ENCODE measurements at regions of chr7 and their contacts with region 1.

Region 1: DNA sequence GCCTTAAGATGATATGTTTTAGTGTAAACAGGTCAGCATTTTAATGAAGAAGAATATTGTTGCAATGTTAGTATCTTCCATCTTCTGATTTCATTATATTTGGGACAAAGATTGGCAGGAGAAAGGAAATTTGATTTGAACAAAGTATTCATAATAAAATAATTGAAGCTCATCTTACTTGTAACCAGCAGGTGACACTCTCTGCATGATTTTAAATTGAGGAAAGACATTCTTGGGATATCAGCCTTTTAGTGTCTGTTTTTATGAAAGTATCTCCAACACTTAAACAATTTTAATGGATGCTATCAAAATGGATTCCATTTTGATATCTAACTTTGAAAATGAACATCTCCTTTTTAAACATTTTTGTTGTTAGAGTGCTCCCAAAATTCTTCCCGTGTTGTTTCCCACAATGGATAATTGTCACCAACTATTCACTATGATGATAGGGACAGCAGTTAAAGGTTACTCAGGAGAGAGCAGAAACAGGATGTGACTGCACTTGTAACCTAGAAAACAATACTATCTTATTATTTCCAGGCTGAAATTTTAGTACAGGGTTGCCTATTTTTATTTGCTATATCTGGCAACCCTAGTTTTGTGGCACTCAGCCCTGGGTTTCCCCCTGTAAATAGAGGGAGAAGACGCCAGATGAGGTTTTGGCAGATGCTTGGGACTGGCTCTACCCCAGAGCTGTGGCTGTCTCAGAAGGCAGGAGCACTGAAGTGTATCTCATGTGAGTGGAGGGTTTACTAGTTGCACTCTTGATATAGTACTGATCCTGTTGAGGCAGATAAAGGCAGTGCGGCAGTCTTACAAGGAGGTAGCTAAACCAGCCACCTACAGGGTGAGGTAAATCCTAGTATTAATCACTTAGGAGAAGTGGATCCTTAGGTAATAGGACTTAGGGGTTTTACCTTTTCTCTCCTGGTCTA is 31.0 kb upstream of the ABCB4 start:
- DNase-seq: peak; percentile 39
- H3K4me3 ChIP-seq: no peak overlapping the region
- H3K27ac ChIP-seq: no peak overlapping the region
- H3K4me1 ChIP-seq: no peaks in the 10 kb centered on the region
- H3K27me3 ChIP-seq: peaks cover 0 to 5% of the 10 kb centered on the region in 2 experiments
- CTCF ChIP-seq: peak; percentile 9 to 29
- POLR2A ChIP-seq: no peak

Region 2: DNA sequence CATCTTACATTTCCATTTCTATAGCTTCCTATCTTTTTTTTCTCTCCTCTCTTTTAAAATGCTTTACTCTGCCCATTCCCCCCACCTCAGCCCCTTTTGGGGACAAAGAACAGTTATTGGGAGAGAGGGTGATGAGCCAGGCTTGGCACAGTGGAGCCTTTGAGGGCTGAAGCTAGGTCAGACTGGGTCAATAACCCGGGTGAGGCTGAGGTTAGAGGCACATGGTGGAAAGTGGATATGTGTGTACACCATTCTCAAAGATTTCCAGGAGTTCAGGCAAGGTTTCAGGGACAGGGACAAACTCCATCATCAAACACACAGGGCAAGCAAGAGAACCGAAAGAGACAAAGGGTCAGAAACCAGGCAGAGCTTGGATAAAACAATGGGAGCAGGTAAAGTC is 42.5 kb before region 1 on chr7:
- CTCF ChIA-PET with region 1: no interaction called
- POLR2A ChIA-PET with region 1: no interaction called
- dilution Hi-C with region 1: no loop called
- intact Hi-C with region 1: no loop called
- DNase-seq: no peak
- H3K4me3 ChIP-seq: no peak overlapping the region
- H3K27ac ChIP-seq: no peak overlapping the region
- H3K4me1 ChIP-seq: no peaks in the 10 kb centered on the region
- H3K27me3 ChIP-seq: no peaks in the 10 kb centered on the region
- CTCF ChIP-seq: no peak
- POLR2A ChIP-seq: no peak

Region 3: DNA sequence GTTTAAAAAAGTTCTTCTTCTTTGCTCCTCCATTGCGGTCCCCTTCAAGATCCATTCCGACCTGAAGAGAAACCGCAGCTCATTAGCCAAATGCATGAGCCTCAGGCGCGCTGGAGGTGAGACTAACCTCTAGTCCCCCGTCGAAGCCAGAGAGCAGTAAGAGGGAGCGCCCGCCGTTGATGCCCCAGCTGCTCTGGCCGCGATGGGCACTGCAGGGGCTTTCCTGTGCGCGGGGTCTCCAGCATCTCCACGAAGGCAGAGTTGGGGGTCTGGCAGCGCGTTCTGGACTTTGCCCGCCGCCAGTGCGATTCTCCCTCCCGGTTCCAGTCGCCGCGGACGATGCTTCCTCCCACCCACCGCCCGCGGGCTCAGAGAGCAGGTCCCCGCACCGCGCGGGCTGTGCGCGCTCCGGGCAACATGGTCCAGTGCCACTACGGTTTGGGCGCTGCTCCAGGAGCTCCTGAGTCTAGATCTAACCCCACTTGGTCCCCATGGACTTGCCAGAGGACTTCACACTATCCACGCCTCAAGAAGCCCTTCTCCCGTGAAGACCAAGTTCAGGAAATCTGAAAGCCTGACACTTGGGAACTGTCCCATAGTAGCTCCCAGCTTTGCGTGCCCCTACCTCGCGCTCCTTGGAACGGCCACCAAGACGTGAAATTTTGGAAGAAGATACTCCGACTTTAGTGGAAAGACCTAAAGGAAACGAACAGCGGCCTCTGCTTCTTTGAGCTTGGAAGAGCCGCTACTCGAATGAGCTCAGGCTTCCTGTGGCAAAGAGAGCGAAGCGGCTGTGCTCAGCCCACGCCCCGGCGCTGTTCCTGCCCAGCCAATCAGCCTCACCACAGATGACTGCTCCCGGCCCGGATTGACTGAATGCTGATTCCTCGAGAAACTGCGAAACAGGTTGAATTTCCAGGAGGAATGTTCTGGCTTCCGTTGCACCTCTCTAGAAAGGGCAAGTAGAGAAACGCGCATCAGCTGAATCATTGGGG is 93.9 kb after region 1 on chr7 and contains the start of gene ABCB1:
- CTCF ChIA-PET with region 1: interaction called, 14 read pairs
- POLR2A ChIA-PET with region 1: no interaction called
- dilution Hi-C with region 1: no loop called
- intact Hi-C with region 1: no loop called
- DNase-seq: peak; percentile 52
- H3K4me3 ChIP-seq: peak within 1 kb of the TSS; percentile 6 to 85 (median 58)
- H3K27ac ChIP-seq: no peak within 1 kb of the TSS
- H3K4me1 ChIP-seq: peaks cover 10% of the 10 kb centered on the region
- H3K27me3 ChIP-seq: peaks cover 22 to 40% of the 10 kb centered on the region in 2 experiments
- CTCF ChIP-seq: no peak
- POLR2A ChIP-seq: no peak
- total RNA-seq, gene ABCB1: 7.1 and 13.4 TPM in 2 replicates

Region 4: GRCh38 chr7:87797798-87798403 is 291.4 kb after region 1 on chr7:
- CTCF ChIA-PET with region 1: interaction called, 21 read pairs
- POLR2A ChIA-PET with region 1: no interaction called
- dilution Hi-C with region 1: no loop called
- intact Hi-C with region 1: loop called (anchors 5 kb)
- DNase-seq: peak; percentile 73
- H3K4me3 ChIP-seq: no peak overlapping the region
- H3K27ac ChIP-seq: no peak overlapping the region
- H3K4me1 ChIP-seq: no peaks in the 10 kb centered on the region
- H3K27me3 ChIP-seq: no peaks in the 10 kb centered on the region
- CTCF ChIP-seq: peak; percentile 44 to 56
- POLR2A ChIP-seq: no peak

Region 5: GRCh38 chr7:88104732-88105131 is 598.2 kb after region 1 on chr7:
- CTCF ChIA-PET with region 1: interaction called, 15 read pairs
- POLR2A ChIA-PET with region 1: no interaction called
- dilution Hi-C with region 1: no loop called
- intact Hi-C with region 1: no loop called
- DNase-seq: peak; percentile 76
- H3K4me3 ChIP-seq: no peak overlapping the region
- H3K27ac ChIP-seq: no peak overlapping the region
- H3K4me1 ChIP-seq: no peaks in the 10 kb centered on the region
- H3K27me3 ChIP-seq: no peaks in the 10 kb centered on the region
- CTCF ChIP-seq: no peak
- POLR2A ChIP-seq: no peak

Region 6: DNA sequence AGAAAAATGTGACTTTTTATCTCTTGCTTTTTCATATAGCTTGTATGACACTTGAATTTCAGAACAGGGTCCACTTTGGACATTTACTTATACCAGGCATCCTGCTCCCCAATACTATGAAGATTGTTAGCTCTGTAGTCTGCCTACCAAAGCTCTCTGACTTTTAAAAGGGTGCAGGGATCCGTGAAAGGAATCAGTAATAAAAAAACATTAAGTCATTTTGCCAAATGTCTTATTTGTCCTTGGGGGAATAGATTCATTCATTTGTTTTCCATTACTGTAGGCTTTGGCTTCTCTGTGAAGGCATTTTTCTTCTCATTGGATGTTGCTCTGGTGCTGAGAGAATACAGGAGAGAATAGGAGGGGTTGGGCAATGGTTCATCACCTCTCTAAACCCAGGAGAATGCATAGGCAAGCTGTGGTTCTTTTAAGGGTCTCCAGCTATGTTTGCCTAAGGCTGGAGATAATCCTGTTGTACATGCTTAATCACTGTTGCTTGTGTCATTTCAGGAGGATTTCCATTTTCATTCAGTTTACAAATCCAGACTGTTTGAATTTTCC is 609.8 kb after region 1 on chr7:
- CTCF ChIA-PET with region 1: interaction called, 76 read pairs
- POLR2A ChIA-PET with region 1: no interaction called
- dilution Hi-C with region 1: no loop called
- intact Hi-C with region 1: loop called (anchors 1 kb)
- DNase-seq: no peak
- H3K4me3 ChIP-seq: no peak overlapping the region
- H3K27ac ChIP-seq: no peak overlapping the region
- H3K4me1 ChIP-seq: no peaks in the 10 kb centered on the region
- H3K27me3 ChIP-seq: no peaks in the 10 kb centered on the region
- CTCF ChIP-seq: no peak
- POLR2A ChIP-seq: no peak